SK-N-SH (cell line): ENCODE measurements at regions of chr16 and their contacts with region 1.

Region 1: GRCh38 chr16:4330277-4330874 is 14.5 kb downstream of the GLIS2 start:
- DNase-seq: peak; percentile 94
- H3K4me3 ChIP-seq: no peak overlapping the region
- H3K27ac ChIP-seq: no peak overlapping the region
- H3K4me1 ChIP-seq: peaks cover 15 to 21% of the 10 kb centered on the region in 2 experiments; a peak in 3 of 4 replicates
- H3K27me3 ChIP-seq: no peaks in the 10 kb centered on the region
- CTCF ChIP-seq: peak; percentile 96
- EP300 ChIP-seq: no peak
- RAD21 ChIP-seq: peak; percentile 93

Region 2: GRCh38 chr16:4261557-4262172 is 68.7 kb before region 1 on chr16:
- CTCF ChIA-PET with region 1: interaction called, 112 read pairs
- POLR2A ChIA-PET with region 1: no interaction called
- DNase-seq: peak; percentile 78
- H3K4me3 ChIP-seq: no peak overlapping the region; a peak in 1 of 4 replicates
- H3K27ac ChIP-seq: no peak overlapping the region
- H3K4me1 ChIP-seq: peaks cover 6 to 23% of the 10 kb centered on the region in 2 experiments; a peak in 1 of 4 replicates
- H3K27me3 ChIP-seq: no peaks in the 10 kb centered on the region
- CTCF ChIP-seq: peak; percentile 68
- EP300 ChIP-seq: no peak
- RAD21 ChIP-seq: peak; percentile 55

Region 3: GRCh38 chr16:4271176-4272066 is 59.0 kb before region 1 on chr16:
- CTCF ChIA-PET with region 1: interaction called, 112 read pairs
- POLR2A ChIA-PET with region 1: interaction called, 8 read pairs
- DNase-seq: peak; percentile 90
- H3K4me3 ChIP-seq: peak overlapping the region; percentile 65 to 84
- H3K27ac ChIP-seq: peak overlapping the region; percentile 79 to 91
- H3K4me1 ChIP-seq: peaks cover 0 to 12% of the 10 kb centered on the region in 2 experiments; a peak in 1 of 4 replicates
- H3K27me3 ChIP-seq: no peaks in the 10 kb centered on the region
- CTCF ChIP-seq: no peak
- EP300 ChIP-seq: no peak
- RAD21 ChIP-seq: no peak

Region 4: DNA sequence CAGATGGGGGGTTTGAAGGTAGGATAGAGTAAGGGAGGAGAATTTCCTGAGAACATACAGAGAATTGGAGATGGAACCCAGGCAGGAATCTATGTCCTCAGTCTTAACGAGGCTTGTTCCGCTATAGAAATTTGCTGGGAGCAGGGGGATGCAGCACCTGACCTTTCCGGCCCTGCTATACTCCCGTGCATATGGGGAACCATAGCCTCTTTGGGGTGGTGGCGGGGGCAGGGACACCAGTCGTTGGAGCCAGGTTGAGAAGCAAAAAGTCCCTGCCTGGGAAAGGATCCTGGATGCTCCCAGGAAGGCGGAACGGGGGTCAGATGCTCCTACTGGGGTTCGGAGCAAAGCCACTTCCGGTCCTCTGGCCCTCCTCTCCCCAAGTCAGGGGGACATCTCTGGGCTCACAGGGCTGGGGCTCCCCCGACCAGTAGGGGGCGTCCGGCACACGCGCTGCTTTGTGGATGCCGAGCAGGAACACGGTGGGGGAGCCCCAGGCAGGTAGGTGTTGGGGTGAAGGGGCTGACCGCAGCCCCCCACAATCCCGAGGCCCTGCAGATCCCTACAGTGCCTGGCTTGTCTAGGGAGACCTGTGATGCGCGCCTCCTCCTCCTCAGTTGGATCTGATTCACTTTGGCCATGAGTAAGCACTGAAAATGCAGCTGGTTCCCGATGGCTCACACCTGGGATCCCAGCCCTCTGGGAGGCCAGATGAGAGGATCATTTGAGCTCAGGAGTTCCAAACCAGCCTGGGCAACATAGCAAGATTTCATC is 42.0 kb before region 1 on chr16:
- CTCF ChIA-PET with region 1: interaction called, 281 read pairs
- POLR2A ChIA-PET with region 1: interaction called, 4 read pairs
- DNase-seq: peak; percentile 91
- H3K4me3 ChIP-seq: no peak overlapping the region
- H3K27ac ChIP-seq: no peak overlapping the region
- H3K4me1 ChIP-seq: peaks cover 0 to 10% of the 10 kb centered on the region in 2 experiments; a peak in 1 of 4 replicates
- H3K27me3 ChIP-seq: no peaks in the 10 kb centered on the region
- CTCF ChIP-seq: peak; percentile 95
- EP300 ChIP-seq: no peak
- RAD21 ChIP-seq: peak; percentile 83

Region 5: DNA sequence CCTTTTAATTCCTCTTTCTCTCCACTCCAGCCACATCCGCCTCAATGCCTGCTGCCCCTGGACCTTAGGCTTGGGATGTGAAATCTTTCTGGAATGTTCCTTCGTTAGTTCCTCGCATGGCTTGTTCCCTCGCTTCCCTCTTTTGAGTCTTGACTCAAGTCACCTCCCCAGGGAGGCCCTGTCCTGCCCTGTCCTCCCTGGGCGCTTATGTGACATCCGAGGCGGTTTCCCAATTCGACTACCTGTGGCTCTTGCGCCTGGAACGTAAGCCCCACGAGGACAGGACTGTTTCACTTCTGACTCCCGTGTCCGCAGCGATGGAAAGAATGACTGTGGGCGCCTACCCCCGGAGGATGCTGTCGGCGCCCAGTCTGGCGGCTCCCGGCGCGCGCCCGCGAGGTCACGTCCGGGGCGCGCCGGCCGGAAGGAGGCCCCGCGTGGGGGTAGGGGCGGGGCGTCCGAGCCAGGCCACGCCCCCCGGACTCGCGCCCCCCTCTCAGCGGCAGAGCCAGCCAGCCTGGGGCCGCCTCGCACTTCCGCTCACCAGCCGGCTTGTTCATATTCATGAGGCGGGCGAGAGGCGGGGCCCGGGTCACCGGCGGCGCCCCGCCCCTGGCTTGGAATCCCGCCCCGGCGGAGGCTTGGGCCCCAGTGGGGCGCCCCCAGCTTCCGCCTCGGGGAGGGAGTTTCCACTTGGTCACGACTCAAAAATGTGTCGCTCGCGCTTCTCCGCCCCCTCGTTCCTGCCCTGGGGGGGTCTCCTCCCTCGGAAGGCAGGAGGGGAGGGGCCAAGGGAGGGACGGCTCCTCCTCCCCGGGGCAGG is 22.9 kb before region 1 on chr16:
- CTCF ChIA-PET with region 1: interaction called, 13 read pairs
- POLR2A ChIA-PET with region 1: no interaction called
- DNase-seq: peak; percentile 99
- H3K4me3 ChIP-seq: peak overlapping the region; percentile 52 to 56
- H3K27ac ChIP-seq: peak overlapping the region; percentile 39 to 77; a peak in 3 of 4 replicates
- H3K4me1 ChIP-seq: peaks cover 0 to 16% of the 10 kb centered on the region in 2 experiments; a peak in 1 of 4 replicates
- H3K27me3 ChIP-seq: no peaks in the 10 kb centered on the region
- CTCF ChIP-seq: no peak
- EP300 ChIP-seq: no peak
- RAD21 ChIP-seq: no peak

Region 6: DNA sequence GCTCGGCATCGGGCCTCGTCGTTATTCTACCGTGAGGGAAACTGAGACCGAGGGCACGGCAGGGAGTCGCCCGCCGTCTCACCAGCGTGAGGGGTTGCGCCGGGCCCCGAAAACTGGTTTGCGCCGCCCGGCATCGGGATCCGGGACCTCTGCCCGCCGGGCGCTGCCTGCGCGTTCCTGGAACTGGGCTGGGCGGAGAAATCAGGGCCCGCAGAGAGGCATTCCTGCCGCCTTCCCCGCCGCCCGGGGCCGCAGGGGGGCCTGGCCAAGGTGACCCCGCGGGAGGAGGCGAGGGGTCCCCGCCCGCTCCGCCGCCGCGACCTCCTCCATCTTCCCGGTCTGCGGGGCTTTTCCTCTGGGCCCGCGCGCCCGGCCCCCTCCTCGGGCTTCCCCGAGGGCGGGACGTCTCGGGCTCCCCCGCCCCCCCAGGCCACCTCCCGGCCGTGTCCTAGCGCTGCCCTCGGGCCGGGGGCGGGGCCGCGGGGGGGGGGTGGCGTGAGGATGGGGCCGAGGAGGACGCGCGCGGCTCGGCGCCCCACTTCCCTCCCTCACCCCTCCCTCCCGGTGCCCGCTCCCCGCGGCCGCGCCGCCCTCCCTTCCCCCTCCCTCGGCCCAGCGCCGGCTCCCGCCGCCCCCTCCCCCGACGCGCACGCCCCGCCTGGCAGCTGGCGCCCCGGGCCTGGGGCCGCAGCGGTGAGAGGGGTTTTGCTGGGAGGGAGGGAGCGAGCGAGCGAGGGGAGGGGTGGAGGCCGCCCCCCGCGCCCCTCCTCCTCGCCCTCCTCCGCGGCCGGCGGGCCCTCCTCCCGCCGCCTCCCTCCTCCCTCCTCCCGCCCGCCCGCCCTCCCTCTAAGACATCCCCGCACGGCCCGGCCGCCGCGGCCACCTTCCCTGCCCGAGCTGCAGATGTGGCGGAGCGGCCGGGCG is 14.9 kb before region 1 on chr16 and contains the start of gene GLIS2:
- CTCF ChIA-PET with region 1: interaction called, 22 read pairs
- POLR2A ChIA-PET with region 1: no interaction called
- DNase-seq: peak; percentile 94
- H3K4me3 ChIP-seq: peak within 1 kb of the TSS; percentile 76 to 81
- H3K27ac ChIP-seq: peak within 1 kb of the TSS; percentile 78 to 84
- H3K4me1 ChIP-seq: peaks cover 13 to 41% of the 10 kb centered on the region in 2 experiments; a peak in 1 of 4 replicates
- H3K27me3 ChIP-seq: no peaks in the 10 kb centered on the region
- CTCF ChIP-seq: no peak
- EP300 ChIP-seq: no peak
- RAD21 ChIP-seq: no peak
- polyA plus RNA-seq, gene GLIS2: 3.3 and 6.5 TPM in 2 replicates